MCF 10A (cell line): ENCODE measurements at regions of chr1 and their contacts with region 1.

Region 1: DNA sequence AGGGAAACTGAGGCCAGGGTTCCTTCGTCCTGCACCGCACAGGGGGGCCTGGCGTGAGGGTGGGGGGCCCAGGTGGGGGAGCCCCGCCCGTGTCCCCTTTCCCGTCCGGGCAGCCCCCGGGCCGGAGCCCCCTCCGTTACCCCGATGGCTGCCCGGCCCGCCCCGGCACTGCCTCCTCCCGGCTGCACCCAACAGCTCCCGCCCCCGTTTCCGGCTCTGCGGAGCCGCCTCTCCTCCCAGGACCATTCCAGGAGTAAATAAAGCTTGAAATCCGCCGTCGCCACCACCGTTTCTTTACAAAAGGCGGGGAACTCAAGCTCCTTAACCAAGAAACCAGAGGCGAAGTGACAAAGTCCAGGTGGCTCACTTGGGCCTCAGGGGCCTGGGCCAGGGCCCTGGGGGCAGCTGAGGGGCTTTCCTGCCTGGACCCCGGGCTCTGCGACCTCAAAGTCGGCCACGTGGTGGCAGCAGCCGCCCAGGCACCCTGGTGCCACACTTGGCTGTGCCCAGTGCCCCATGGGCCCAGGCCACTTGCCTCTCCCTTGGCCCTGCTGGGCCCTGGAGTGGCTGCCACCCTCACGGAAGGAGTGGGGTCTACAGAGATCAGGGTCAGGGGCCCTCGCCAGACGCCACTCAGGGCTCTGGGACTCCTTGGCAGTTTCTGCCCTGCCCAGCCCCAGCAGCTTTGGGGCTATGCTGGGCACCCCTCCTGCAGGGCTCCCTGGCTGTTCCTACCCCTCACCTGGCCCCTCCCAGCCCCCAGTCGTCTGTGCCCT is 514 bp upstream of the FAAP20 start:
- DNase-seq: peak; percentile 87
- H3K4me3 Mint-ChIP-seq: peak overlapping the region; percentile 71
- H3K27ac Mint-ChIP-seq: no peak overlapping the region
- H3K4me1 Mint-ChIP-seq: peaks cover 18% of the 10 kb centered on the region
- H3K27me3 Mint-ChIP-seq: no peaks in the 10 kb centered on the region
- CTCF ChIP-seq: peak; percentile 96

Region 2: DNA sequence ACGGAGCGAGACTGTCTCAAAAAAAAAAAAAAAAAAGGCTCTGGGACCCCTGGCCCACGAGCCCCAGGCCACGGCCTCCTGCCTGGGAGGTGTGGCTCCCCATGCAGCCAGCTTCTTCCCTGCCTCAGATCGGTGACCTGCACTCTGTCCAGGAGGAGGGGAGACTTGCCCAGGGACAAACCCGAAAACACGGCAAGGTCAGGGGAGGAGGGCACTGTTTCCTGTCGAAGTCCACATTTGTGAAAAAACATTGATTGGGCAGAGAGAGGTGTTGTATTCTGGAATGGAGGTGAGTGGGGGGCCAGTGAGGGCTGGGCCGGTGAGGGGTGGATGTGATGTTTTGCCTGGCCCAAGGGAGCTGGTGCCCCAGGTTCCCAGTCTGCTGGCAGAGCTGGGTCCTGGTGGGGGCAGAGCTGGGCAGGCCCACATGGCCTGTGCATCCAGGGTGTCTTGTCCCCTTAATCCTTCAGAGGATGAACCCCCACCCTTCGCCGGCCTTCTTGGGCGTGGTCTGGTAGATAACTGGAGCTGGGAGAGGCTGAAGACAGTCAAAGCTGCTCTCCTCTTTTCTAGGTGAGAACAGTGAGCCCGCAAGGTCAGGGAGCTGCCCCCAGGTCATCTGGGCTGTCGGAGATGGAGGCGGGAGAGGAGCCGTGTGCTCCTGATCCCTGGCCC is 11.9 kb after region 1 on chr1:
- CTCF ChIA-PET with region 1: interaction called, 27 read pairs
- POLR2A ChIA-PET with region 1: interaction called, 8 read pairs
- intact Hi-C with region 1: no loop called
- DNase-seq: no peak
- H3K4me3 Mint-ChIP-seq: no peak overlapping the region
- H3K27ac Mint-ChIP-seq: no peak overlapping the region
- H3K4me1 Mint-ChIP-seq: peaks cover 26% of the 10 kb centered on the region
- H3K27me3 Mint-ChIP-seq: no peaks in the 10 kb centered on the region
- CTCF ChIP-seq: no peak

Region 3: DNA sequence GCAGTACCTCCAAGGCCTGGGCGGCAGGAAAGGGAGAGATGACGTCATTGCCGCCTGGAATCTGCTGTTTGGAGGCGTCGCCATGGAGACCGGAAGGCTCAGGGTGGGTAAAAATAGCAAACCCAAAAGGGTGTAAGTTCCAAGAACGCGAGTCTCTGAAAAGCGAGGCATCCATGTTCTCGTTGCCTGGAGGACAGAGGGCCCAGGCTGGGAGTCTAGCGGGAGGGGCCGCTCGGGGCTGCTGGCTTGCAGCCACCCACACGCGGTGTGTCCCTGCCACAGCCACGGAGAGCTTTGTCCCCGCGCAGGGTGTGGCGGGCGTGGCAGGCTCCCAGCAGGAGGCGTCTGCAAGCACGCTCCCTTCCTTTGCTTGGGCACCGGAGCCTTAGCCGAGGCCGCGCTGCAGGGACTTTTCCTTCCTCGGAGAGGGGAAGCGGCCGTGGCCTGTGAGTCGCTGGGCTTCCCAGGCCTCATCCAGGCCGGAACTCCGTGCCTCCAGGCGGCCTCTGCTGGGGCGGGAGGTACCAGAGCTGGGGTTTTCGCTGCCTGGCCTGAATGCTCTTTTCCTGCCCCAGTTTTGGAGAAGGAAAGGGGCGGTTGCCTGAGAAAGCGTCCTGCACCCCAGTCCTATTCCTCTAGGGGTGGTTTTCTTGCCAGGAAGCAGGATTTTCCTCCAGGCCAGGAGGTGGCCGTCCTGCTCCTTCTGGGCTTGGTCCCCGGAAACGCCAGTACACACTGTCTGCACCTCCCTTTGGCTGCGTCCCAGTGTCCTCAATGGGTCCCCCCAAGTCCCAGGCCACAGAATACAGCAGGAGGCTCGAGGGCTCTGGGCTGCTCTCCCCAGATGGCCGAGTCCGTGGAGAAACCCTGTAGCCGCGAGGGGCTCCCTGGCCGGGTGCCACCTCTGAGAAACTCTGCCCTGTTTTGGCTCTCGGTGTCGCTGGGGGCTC is 17.7 kb after region 1 on chr1:
- CTCF ChIA-PET with region 1: interaction called, 27 read pairs
- POLR2A ChIA-PET with region 1: interaction called, 3 read pairs
- intact Hi-C with region 1: no loop called
- DNase-seq: peak; percentile 89
- H3K4me3 Mint-ChIP-seq: peak overlapping the region; percentile 16
- H3K27ac Mint-ChIP-seq: peak overlapping the region; percentile 83
- H3K4me1 Mint-ChIP-seq: peaks cover 14% of the 10 kb centered on the region
- H3K27me3 Mint-ChIP-seq: no peaks in the 10 kb centered on the region
- CTCF ChIP-seq: peak; percentile 13

Region 4: DNA sequence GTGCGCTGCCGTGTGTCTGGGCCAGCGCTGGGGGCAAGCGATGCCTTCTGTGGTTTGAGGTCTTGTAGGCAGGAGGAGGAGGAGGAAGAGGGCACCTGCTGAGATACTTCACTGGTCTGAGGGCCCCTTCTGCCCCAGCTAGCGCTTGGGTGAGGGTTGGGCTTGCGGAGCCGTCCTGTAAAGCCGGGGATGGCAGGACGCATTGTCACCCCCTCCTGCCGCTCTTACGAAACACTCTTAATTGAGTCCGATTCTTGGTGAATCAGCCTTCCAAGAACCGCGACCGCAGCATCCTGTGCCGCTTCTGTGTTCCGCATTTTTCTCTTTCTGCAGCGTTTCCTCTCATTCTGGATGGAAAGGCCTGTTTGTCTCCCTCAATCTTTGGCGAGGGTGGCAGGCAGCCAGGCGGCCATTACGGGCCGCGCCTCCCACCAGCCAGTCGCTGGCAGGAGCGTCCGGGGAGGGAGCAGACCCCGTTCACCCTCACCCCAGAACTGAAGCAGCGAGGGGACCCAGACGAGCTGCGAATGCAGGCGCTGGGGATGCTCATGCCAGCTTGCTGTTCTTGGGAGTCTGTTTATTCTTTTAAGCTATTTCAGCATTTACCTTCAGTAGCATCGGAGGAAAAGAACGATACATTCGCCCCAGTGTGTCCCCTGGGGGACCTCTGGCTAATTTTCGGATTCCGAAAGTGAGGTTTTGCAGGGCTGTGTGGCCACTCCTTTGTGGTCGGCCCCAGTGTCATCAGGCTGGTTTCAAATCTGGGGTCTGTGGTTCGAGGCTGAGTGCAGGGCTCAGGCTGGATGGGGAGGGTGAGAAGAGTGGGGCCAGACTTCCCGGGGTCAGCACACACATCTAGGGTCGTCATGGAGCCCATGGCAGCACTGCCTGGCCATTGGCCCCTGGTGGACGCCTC is 95.8 kb after region 1 on chr1:
- CTCF ChIA-PET with region 1: interaction called, 6 read pairs
- POLR2A ChIA-PET with region 1: no interaction called
- intact Hi-C with region 1: loop called (anchors 10 kb)
- DNase-seq: peak; percentile 97
- H3K4me3 Mint-ChIP-seq: peak overlapping the region; percentile 69
- H3K27ac Mint-ChIP-seq: peak overlapping the region; percentile 81
- H3K4me1 Mint-ChIP-seq: peaks cover 26% of the 10 kb centered on the region
- H3K27me3 Mint-ChIP-seq: no peaks in the 10 kb centered on the region
- CTCF ChIP-seq: no peak

Region 5: GRCh38 chr1:2381741-2382620 is 186.9 kb after region 1 on chr1:
- CTCF ChIA-PET with region 1: interaction called, 116 read pairs
- POLR2A ChIA-PET with region 1: interaction called, 18 read pairs
- intact Hi-C with region 1: loop called (anchors 1 kb)
- DNase-seq: peak; percentile 72
- H3K4me3 Mint-ChIP-seq: no peak overlapping the region
- H3K27ac Mint-ChIP-seq: no peak overlapping the region
- H3K4me1 Mint-ChIP-seq: no peaks in the 10 kb centered on the region
- H3K27me3 Mint-ChIP-seq: no peaks in the 10 kb centered on the region
- CTCF ChIP-seq: peak; percentile 91

Region 6: GRCh38 chr1:2391041-2391930 is 196.2 kb after region 1 on chr1 and contains the starts of genes MORN1 and RER1:
- CTCF ChIA-PET with region 1: interaction called, 14 read pairs
- POLR2A ChIA-PET with region 1: interaction called, 29 read pairs
- intact Hi-C with region 1: no loop called
- DNase-seq: peak; percentile 98
- H3K4me3 Mint-ChIP-seq: peak within 1 kb of the TSS; percentile 66
- H3K27ac Mint-ChIP-seq: peak within 1 kb of the TSS; percentile 87
- H3K4me1 Mint-ChIP-seq: peaks cover 18% of the 10 kb centered on the region
- H3K27me3 Mint-ChIP-seq: no peaks in the 10 kb centered on the region
- CTCF ChIP-seq: no peak
- total RNA-seq, gene MORN1: 19.4 and 28.0 TPM in 2 replicates
- total RNA-seq, gene RER1: 172 and 224 TPM in 2 replicates

Region 7: GRCh38 chr1:3423245-3423829 is 1228.3 kb after region 1 on chr1:
- CTCF ChIA-PET with region 1: interaction called, 4 read pairs
- POLR2A ChIA-PET with region 1: interaction called, 4 read pairs
- intact Hi-C with region 1: loop called (anchors 5 kb)
- DNase-seq: no peak
- H3K4me3 Mint-ChIP-seq: no peak overlapping the region
- H3K27ac Mint-ChIP-seq: no peak overlapping the region
- H3K4me1 Mint-ChIP-seq: no peaks in the 10 kb centered on the region
- H3K27me3 Mint-ChIP-seq: peaks cover 32% of the 10 kb centered on the region
- CTCF ChIP-seq: no peak